AG04449 (cell line): ENCODE measurements at regions of chr3 and their contacts with region 1.

Region 1: DNA sequence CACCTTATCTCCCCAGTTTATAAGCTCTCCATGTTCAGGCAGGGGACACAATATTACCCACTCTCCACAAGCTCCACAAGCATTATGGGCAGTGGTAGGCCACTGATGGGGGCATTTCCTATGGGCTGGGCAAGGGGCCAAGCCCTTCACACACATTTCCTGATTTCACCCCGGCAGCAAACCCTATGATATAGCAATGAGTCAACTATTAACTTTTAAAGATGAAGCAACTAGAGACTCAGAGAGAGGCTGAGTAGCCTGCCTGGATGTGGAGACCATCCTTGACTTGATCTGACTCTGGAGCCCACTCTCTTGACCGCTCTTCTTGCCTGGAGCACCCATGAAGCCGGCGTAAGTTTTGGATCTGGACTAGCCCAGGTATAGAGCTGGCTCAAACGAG is 27.4 kb downstream of the FOXL2NB start:
- DNase-seq: no peak
- H3K4me3 ChIP-seq: no peak overlapping the region
- CTCF ChIP-seq: no peak

Region 2: GRCh38 chr3:138824114-138824506 is 150.4 kb before region 1 on chr3:
- CTCF ChIA-PET with region 1: no interaction called
- POLR2A ChIA-PET with region 1: no interaction called
- DNase-seq: no peak
- H3K4me3 ChIP-seq: no peak overlapping the region
- CTCF ChIP-seq: no peak

Region 3: DNA sequence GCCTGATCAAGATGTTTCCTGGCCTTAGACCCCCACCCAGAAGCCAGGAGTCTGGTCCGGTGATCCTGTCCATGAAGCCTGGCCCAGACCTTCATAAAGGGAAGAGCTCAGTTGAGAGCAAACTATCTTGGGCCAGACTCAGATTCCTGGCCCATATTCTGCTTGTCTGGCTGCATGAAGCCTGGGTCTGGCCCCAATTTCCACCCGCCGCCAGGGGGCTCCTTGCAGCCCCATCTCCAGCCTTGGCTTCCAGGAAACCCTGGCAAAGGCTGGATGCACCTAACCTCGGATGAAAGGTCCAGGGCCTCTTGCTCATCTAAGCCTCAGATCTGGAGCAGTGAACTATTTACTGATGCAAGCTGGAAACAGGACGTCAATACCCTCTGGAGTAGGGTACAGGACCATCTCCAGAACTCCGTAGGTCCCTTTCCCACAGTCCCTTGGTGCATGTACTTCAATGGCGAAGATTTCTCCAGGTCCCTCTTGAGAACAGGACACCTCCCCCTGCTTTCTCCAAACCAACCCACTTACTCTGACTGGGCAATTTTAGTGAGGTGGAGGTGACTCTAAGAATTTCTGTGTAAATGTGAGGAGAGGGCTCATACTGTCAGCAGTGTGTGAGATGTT is 33.1 kb before region 1 on chr3:
- CTCF ChIA-PET with region 1: interaction called, 35 read pairs
- POLR2A ChIA-PET with region 1: no interaction called
- DNase-seq: no peak
- H3K4me3 ChIP-seq: no peak overlapping the region
- CTCF ChIP-seq: peak; percentile 60

Region 4: DNA sequence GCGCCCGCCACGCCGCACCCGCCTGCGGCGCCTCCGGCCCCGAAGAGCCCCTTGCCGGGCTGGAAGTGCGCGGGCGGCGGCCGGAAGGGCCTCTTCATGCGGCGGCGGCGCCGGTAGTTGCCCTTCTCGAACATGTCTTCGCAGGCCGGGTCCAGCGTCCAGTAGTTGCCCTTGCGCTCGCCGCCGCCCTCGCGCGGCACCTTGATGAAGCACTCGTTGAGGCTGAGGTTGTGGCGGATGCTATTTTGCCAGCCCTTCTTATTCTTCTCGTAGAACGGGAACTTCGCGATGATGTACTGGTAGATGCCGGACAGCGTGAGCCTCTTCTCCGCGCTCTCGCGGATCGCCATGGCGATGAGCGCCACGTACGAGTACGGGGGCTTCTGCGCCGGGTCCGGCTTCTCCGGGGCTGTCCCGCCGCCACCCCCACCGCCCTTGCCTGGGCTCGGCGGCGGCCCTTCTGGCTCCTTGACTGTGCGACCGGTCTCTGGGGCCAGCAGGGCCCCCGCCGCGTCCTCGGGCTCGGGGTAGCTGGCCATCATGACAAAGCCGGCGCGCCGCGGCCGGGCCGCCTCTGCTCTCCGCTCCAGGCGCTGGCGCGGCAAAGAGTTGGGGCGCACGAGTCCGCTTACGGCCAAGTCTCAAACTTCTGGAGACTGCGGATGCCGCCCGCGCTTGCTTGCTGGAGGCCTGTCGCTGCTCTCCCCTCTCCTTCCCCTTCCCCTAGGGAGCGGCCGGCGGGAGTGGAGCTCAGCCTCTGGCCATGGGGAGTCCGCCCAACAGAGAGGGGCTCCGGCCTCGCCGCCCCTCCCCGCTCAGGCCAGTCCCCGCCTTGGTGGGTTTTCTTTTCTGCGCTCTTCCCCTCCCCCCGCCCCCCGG is 28.0 kb before region 1 on chr3:
- CTCF ChIA-PET with region 1: interaction called, 17 read pairs
- POLR2A ChIA-PET with region 1: no interaction called
- DNase-seq: no peak
- H3K4me3 ChIP-seq: peak overlapping the region; percentile 64
- CTCF ChIP-seq: peak; percentile 51